ENCODE measurements at regions of chr1 and their contacts with region 1.

Region 1: GRCh38 chr1:32933742-32934322 is 30.8 kb downstream of the RNF19B start:
- DNase-seq: no peak
- H3K4me3 ChIP-seq: no peak overlapping the region
- H3K4me3 Mint-ChIP-seq: no peak overlapping the region
- H3K27ac ChIP-seq: no peak overlapping the region
- H3K27ac Mint-ChIP-seq: peak overlapping the region in 3 of 7 donors; percentile 43 to 91 (median 61)
- H3K4me1 ChIP-seq: no peaks in the 10 kb centered on the region
- H3K4me1 Mint-ChIP-seq: peaks cover 0 to 4% (median 0%) of the 10 kb centered on the region in 4 donors
- H3K27me3 ChIP-seq: no peaks in the 10 kb centered on the region
- H3K27me3 Mint-ChIP-seq: no peaks in the 10 kb centered on the region

Region 2: GRCh38 chr1:32861904-32862695 is 71.7 kb before region 1 on chr1:
- CTCF ChIA-PET with region 1: no interaction called
- POLR2A ChIA-PET with region 1: no interaction called
- intact Hi-C with region 1: no loop called
- DNase-seq: no peak
- H3K4me3 ChIP-seq: no peak overlapping the region
- H3K4me3 Mint-ChIP-seq: no peak overlapping the region
- H3K27ac ChIP-seq: no peak overlapping the region
- H3K27ac Mint-ChIP-seq: peak overlapping the region in 2 of 7 donors; percentile 6 to 74
- H3K4me1 ChIP-seq: no peaks in the 10 kb centered on the region
- H3K4me1 Mint-ChIP-seq: no peaks in the 10 kb centered on the region
- H3K27me3 ChIP-seq: no peaks in the 10 kb centered on the region
- H3K27me3 Mint-ChIP-seq: no peaks in the 10 kb centered on the region

Region 3: DNA sequence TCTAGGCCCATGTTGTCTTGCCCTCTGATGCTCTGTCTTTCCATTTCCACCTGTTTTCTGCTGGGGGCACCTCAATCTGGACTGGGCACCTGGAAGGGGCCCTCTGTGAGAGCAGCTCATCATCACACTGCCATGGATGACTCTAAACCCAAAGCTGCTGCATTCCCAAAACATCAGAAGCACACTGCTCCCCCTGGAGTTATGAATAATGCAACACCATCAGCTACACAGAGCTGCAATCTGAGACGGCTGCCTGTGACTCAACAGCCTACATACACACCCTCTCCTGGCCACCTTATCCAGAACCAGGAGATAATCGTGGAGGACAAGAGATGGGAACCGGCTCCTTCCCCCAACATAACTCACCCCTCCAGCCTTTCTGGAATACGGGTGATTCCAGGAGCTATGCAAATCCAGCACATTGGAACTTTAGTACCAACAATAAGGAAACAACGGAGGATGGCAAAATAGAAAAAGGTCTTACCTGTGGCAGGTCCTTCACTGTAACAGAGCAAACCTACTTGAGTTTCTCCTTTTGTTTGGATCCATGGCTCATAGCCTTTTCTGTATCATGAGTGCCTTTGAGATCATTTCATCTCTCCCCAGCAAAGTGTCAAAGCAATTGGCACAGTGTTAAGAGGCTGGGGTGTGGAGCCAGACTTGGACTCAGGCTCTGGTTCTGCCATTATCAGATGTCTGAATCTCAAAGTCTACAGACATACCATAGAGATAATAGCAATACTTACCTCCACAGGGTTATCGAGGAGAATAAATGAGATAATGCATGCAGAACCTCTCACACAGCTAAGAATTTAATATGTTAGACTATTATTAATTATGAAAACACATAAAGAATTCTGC is 73.6 kb after region 1 on chr1:
- CTCF ChIA-PET with region 1: interaction called, 63 read pairs
- POLR2A ChIA-PET with region 1: interaction called, 3 read pairs
- intact Hi-C with region 1: loop called (anchors 1 kb)
- DNase-seq: peak in 4 of 5 donors; percentile 12 to 33 (median 22)
- H3K4me3 ChIP-seq: no peak overlapping the region
- H3K4me3 Mint-ChIP-seq: no peak overlapping the region
- H3K27ac ChIP-seq: no peak overlapping the region
- H3K27ac Mint-ChIP-seq: peak overlapping the region in 2 of 7 donors; percentile 40 to 48
- H3K4me1 ChIP-seq: no peaks in the 10 kb centered on the region
- H3K4me1 Mint-ChIP-seq: peaks cover 0 to 10% (median under 1%) of the 10 kb centered on the region in 4 donors
- H3K27me3 ChIP-seq: no peaks in the 10 kb centered on the region
- H3K27me3 Mint-ChIP-seq: no peaks in the 10 kb centered on the region

Region 4: DNA sequence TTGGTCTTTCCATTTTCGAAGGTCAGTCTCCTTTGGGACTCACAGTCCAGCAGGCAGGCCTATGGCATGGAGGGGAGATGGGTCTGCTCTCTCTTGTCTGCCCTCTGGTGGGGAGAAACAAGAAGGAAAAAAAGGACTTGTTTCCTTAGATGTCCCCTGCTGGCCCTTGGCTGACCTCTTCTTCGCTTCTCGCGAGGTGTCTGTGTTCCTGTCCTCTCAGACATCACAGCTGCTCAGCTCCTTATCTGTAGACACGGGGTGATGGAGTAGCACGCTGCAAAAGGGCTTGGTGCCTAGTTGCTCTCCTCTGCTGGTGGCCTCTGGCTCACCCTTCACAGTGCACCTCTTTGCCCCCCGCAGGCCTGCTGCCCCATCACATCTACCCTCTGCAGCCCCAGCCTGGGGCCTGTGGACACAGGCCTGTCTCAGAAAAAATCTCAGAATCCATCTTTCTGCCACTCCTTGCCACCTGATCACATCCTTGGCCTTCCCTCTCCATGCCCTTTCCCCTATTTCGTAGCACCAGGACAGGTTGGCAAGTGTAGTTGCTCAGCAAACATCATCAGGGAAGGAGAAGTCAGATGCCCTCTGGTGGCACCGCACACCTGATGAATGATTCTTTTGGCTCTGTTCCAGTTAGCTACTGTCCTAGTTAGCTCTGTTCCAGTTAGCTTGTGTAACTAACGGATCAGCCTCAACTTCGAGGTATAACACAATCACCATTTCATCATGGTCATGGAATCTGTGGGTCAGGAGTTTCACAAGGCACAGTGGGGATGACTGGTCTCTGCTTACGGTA is 121.6 kb after region 1 on chr1:
- CTCF ChIA-PET with region 1: interaction called, 112 read pairs
- POLR2A ChIA-PET with region 1: no interaction called
- intact Hi-C with region 1: loop called (anchors 1 kb)
- DNase-seq: peak; percentile 30 to 45 (median 32)
- H3K4me3 ChIP-seq: no peak overlapping the region
- H3K4me3 Mint-ChIP-seq: no peak overlapping the region
- H3K27ac ChIP-seq: no peak overlapping the region
- H3K27ac Mint-ChIP-seq: peak overlapping the region in 2 of 7 donors; percentile 31 to 83
- H3K4me1 ChIP-seq: no peaks in the 10 kb centered on the region
- H3K4me1 Mint-ChIP-seq: peaks cover 0 to 9% (median 4%) of the 10 kb centered on the region in 4 donors
- H3K27me3 ChIP-seq: no peaks in the 10 kb centered on the region
- H3K27me3 Mint-ChIP-seq: no peaks in the 10 kb centered on the region

Region 5: DNA sequence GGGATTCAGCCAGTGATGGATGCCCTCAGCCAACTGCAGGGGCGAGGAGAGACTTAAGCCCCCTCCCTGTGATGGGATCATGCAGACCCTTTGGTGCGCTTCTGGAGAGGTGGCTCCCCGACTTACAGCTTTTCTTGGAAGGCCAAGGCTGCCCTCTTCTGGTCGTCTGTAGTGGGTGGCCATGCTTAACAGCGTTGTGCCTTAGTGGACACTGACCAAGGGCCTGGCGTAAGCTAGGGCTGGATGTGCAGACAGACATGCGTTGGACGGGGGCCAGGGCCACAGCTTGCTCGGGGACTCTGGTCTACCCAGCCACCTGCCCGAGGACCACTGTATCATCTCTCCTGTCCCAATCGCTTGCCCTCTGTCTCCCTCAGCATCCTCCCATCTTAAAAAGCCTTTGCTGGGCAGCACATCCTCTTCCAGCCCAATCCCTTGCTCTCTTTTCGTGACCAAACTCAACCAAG is 152.6 kb after region 1 on chr1:
- CTCF ChIA-PET with region 1: interaction called, 17 read pairs
- POLR2A ChIA-PET with region 1: no interaction called
- intact Hi-C with region 1: loop called (anchors 1 kb)
- DNase-seq: no peak
- H3K4me3 ChIP-seq: no peak overlapping the region
- H3K4me3 Mint-ChIP-seq: no peak overlapping the region
- H3K27ac ChIP-seq: no peak overlapping the region
- H3K27ac Mint-ChIP-seq: peak overlapping the region in 6 of 7 donors; percentile 6 to 56 (median 24)
- H3K4me1 ChIP-seq: peaks cover 35% of the 10 kb centered on the region
- H3K4me1 Mint-ChIP-seq: peaks cover 20 to 56% (median 40%) of the 10 kb centered on the region in 4 donors
- H3K27me3 ChIP-seq: no peaks in the 10 kb centered on the region
- H3K27me3 Mint-ChIP-seq: no peaks in the 10 kb centered on the region

Measured in CD4-positive, alpha-beta memory T cell (primary cell).